Activated CD8-positive, alpha-beta T cell treated with anti-CD3 and anti-CD28 coated beads for 36 hours (primary cell): ENCODE measurements at regions of chr10 and their contacts with region 1.

Region 1: DNA sequence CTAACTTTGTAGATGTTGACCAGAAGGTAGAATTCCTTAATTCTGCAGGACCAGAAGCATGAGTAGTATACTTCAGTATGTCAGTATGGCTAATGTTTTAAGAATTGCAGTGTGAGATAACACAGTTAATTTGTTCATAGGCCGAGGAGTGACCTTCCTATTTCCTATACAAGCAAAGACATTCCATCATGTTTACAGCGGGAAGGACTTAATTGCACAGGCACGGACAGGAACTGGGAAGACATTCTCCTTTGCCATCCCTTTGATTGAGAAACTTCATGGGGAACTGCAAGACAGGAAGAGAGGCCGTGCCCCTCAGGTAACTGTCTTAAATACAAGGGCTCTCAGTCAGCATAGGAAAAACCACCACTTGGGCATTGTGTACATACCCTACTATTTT is 7.2 kb downstream of the DDX21 start:
- DNase-seq: no peak
- ATAC-seq: no peak
- H3K4me3 Mint-ChIP-seq: no peak overlapping the region
- H3K27ac Mint-ChIP-seq: no peak overlapping the region
- H3K4me1 Mint-ChIP-seq: peaks cover 37% of the 10 kb centered on the region
- H3K27me3 Mint-ChIP-seq: no peaks in the 10 kb centered on the region
- CTCF ChIP-seq: no peak

Region 2: DNA sequence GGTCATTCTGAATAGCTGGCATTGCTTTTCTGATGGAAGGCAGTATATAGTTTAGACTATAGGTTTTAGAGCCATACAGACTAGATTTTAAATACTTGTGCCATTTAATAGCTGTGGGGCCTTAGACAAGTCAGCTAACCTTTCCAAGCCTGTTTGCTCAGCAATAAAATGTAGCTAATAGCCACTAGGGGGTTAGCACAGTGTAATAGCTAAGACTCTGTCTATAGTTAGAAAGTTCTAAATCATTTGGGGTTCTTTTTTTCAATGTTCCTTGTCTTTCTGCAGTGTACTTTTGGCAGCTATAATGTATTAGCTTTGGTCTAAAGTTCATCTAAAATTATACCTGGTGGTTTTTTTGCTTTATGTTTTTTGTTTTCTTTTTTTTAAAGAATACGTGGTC is 17.9 kb after region 1 on chr10:
- CTCF ChIA-PET with region 1: interaction called, 14 read pairs
- POLR2A ChIA-PET with region 1: interaction called, 105 read pairs
- intact Hi-C with region 1: no loop called
- DNase-seq: no peak
- ATAC-seq: peak; percentile 42
- H3K4me3 Mint-ChIP-seq: no peak overlapping the region
- H3K27ac Mint-ChIP-seq: no peak overlapping the region
- H3K4me1 Mint-ChIP-seq: peaks cover 3% of the 10 kb centered on the region
- H3K27me3 Mint-ChIP-seq: no peaks in the 10 kb centered on the region
- CTCF ChIP-seq: no peak